CD8-positive, alpha-beta T cell (primary cell): ENCODE measurements at regions of chr10 and their contacts with region 1.

Region 1: DNA sequence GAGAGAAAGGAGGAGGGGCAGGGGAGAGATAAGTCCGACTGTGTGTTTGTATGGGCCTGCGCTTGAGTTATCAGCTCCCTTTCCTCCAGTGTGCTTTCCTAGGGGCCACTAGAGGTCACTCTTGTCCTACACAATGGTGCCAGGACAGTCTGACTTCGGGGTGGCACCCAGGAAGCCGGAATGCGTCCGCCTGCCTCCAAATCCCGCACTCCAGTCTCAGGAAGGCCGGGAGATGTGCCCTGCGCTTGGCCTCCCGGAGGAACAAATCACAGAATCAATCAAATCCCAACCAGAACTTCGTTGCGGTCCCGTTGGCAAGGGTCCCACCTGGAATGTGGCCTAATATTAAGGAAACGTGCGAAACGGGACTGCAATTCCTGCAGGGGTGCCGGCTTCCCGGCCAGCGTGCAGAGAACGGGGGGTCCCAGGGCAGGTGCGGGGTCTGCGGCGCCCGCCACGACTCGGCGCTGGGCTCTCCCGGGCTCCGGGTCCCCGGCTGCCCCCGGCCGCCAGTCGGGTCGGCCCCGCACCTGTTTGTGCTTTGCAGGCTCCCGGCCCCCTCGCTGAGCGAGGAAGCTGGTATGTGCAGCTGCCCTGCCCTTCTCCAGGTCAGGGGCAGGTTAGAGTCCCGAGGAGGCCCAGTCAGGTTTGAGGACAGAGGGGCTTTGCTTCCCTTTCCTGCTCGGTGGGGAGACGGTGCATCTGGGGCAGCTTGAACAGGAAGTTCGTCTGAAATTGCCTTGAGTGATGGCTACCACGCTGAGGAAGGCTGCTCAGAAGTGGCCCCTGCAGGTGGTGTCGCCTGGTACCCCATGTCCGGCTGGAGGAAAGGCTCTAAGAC is 21.0 kb upstream of the HPS1 start:
- DNase-seq: peak; percentile 26 to 90 (median 63)
- ATAC-seq: peak; percentile 95
- H3K4me3 ChIP-seq: peak overlapping the region; percentile 64 to 77
- H3K4me3 Mint-ChIP-seq: peak overlapping the region; percentile 97
- H3K27ac ChIP-seq: peak overlapping the region; percentile 9 to 40
- H3K27ac Mint-ChIP-seq: peak overlapping the region; percentile 90
- H3K4me1 ChIP-seq: peaks cover 6% of the 10 kb centered on the region
- H3K4me1 Mint-ChIP-seq: peaks cover 9% of the 10 kb centered on the region
- H3K27me3 ChIP-seq: peaks cover 0 to 2% of the 10 kb centered on the region in 2 experiments
- H3K27me3 Mint-ChIP-seq: no peaks in the 10 kb centered on the region
- CTCF ChIP-seq: peak; percentile 76

Region 2: DNA sequence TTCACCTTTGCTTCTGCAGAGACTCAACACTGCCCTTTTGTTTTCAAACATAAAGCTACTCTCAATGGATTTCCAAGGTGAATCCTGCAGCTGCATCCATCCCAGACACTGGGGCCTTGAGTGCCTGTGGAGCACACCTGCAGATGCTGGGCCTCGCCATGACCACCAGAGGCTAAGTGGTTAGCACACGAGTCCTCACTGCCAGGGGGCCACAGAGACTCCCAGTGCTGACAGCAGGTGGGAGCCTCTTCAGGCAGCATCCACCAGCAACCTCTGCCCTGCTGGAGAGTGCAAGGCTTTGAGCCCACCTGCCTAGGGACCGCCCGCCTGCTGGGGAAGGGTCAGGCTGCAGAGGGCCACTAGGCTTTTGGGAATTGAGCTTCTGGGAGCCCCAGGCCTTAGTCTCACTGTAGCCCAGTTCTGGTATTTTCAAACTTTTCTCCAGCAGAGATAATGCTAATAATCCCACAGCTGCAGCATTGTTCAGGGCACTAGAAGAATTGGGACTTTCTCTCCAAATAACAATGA is 11.6 kb before region 1 on chr10:
- CTCF ChIA-PET with region 1: interaction called, 14 read pairs
- POLR2A ChIA-PET with region 1: no interaction called
- intact Hi-C with region 1: no loop called
- DNase-seq: no peak
- ATAC-seq: no peak
- H3K4me3 ChIP-seq: no peak overlapping the region
- H3K4me3 Mint-ChIP-seq: no peak overlapping the region
- H3K27ac ChIP-seq: no peak overlapping the region
- H3K27ac Mint-ChIP-seq: no peak overlapping the region
- H3K4me1 ChIP-seq: no peaks in the 10 kb centered on the region
- H3K4me1 Mint-ChIP-seq: no peaks in the 10 kb centered on the region
- H3K27me3 ChIP-seq: no peaks in the 10 kb centered on the region
- H3K27me3 Mint-ChIP-seq: peaks cover 20% of the 10 kb centered on the region
- CTCF ChIP-seq: no peak

Region 3: GRCh38 chr10:98664331-98665042 is 196.8 kb after region 1 on chr10:
- CTCF ChIA-PET with region 1: interaction called, 14 read pairs
- POLR2A ChIA-PET with region 1: no interaction called
- intact Hi-C with region 1: loop called (anchors 1 kb)
- DNase-seq: peak in 6 of 9 experiments; percentile 5 to 63 (median 40)
- ATAC-seq: no peak
- H3K4me3 ChIP-seq: no peak overlapping the region
- H3K4me3 Mint-ChIP-seq: no peak overlapping the region
- H3K27ac ChIP-seq: no peak overlapping the region
- H3K27ac Mint-ChIP-seq: no peak overlapping the region
- H3K4me1 ChIP-seq: no peaks in the 10 kb centered on the region
- H3K4me1 Mint-ChIP-seq: no peaks in the 10 kb centered on the region
- H3K27me3 ChIP-seq: peaks cover 0 to 2% of the 10 kb centered on the region in 2 experiments
- H3K27me3 Mint-ChIP-seq: peaks cover 12% of the 10 kb centered on the region
- CTCF ChIP-seq: peak; percentile 57

Region 4: GRCh38 chr10:99430451-99431189 is 962.9 kb after region 1 on chr10 and contains the start of gene GOT1:
- CTCF ChIA-PET with region 1: no interaction called
- POLR2A ChIA-PET with region 1: no interaction called
- intact Hi-C with region 1: loop called in 1 of 2 experiments (anchors 10 kb)
- DNase-seq: peak; percentile 83 to 98 (median 89)
- ATAC-seq: peak; percentile 92
- H3K4me3 ChIP-seq: peak within 1 kb of the TSS; percentile 81 to 96
- H3K4me3 Mint-ChIP-seq: peak within 1 kb of the TSS; percentile 98
- H3K27ac ChIP-seq: peak within 1 kb of the TSS; percentile 66 to 81
- H3K27ac Mint-ChIP-seq: peak within 1 kb of the TSS; percentile 96
- H3K4me1 ChIP-seq: peaks cover 21% of the 10 kb centered on the region
- H3K4me1 Mint-ChIP-seq: peaks cover 40% of the 10 kb centered on the region
- H3K27me3 ChIP-seq: no peaks in the 10 kb centered on the region
- H3K27me3 Mint-ChIP-seq: no peaks in the 10 kb centered on the region
- CTCF ChIP-seq: no peak
- total RNA-seq, gene GOT1: 7.2 to 8.6 TPM

Region 5: DNA sequence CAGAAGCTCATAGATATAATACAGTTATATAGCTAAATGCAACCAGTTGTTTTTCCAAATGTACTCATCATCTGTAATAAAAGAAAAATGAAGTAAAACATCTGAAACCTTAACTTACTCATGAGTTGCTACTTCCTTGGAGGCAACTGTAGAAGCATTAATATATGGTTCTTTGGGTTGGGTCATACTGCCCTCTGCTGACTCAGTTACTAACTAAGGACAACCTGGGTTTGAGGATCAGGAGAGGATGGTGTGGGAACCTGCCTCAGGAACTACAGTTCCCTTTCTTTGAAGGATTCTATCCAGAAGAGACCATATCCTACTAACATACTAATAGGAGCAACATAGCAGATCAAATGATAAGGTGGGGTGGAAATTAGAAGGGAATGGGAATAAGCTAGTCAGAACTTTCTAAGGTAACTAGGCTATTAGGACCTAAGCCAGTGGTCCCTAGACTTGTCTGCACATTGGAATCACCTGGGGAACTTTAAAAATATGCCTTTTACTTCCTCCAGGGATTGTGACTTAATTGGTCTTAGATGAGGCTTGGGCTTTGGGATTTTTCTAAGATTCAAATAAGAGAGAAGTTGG is 1243.5 kb after region 1 on chr10:
- CTCF ChIA-PET with region 1: no interaction called
- POLR2A ChIA-PET with region 1: no interaction called
- intact Hi-C with region 1: loop called in 1 of 2 experiments (anchors 5 kb)
- DNase-seq: peak in 3 of 9 experiments; percentile 25 to 60 (median 49)
- ATAC-seq: peak; percentile 64
- H3K4me3 ChIP-seq: no peak overlapping the region
- H3K4me3 Mint-ChIP-seq: no peak overlapping the region
- H3K27ac ChIP-seq: no peak overlapping the region
- H3K27ac Mint-ChIP-seq: no peak overlapping the region
- H3K4me1 ChIP-seq: no peaks in the 10 kb centered on the region
- H3K4me1 Mint-ChIP-seq: no peaks in the 10 kb centered on the region
- H3K27me3 ChIP-seq: no peaks in the 10 kb centered on the region
- H3K27me3 Mint-ChIP-seq: no peaks in the 10 kb centered on the region
- CTCF ChIP-seq: peak; percentile 41